Activated CD8-positive, alpha-beta T cell treated with anti-CD3 and anti-CD28 coated beads for 36 hours (primary cell): ENCODE measurements at regions of chr2 and their contacts with region 1.

Region 1: GRCh38 chr2:71068218-71069035 is at the start of gene NAGK:
- DNase-seq: peak; percentile 96
- ATAC-seq: peak; percentile 84
- H3K4me3 Mint-ChIP-seq: peak within 1 kb of the TSS; percentile 87
- H3K27ac Mint-ChIP-seq: peak within 1 kb of the TSS; percentile 98
- H3K4me1 Mint-ChIP-seq: peaks cover 48% of the 10 kb centered on the region
- H3K27me3 Mint-ChIP-seq: no peaks in the 10 kb centered on the region
- CTCF ChIP-seq: no peak
- total RNA-seq, gene NAGK: 33.6 to 38.7 TPM

Region 2: GRCh38 chr2:71045865-71046548 is 22.4 kb before region 1 on chr2:
- CTCF ChIA-PET with region 1: interaction called, 11 read pairs
- POLR2A ChIA-PET with region 1: interaction called, 5 read pairs
- intact Hi-C with region 1: no loop called
- DNase-seq: peak; percentile 19
- ATAC-seq: no peak
- H3K4me3 Mint-ChIP-seq: no peak overlapping the region
- H3K27ac Mint-ChIP-seq: no peak overlapping the region
- H3K4me1 Mint-ChIP-seq: peaks cover 10% of the 10 kb centered on the region
- H3K27me3 Mint-ChIP-seq: peaks cover 6% of the 10 kb centered on the region
- CTCF ChIP-seq: no peak

Region 3: GRCh38 chr2:71082402-71083252 is 14.2 kb after region 1 on chr2:
- CTCF ChIA-PET with region 1: interaction called, 11 read pairs
- POLR2A ChIA-PET with region 1: interaction called, 17 read pairs
- intact Hi-C with region 1: no loop called
- DNase-seq: peak; percentile 89
- ATAC-seq: peak; percentile 87
- H3K4me3 Mint-ChIP-seq: peak overlapping the region; percentile 17
- H3K27ac Mint-ChIP-seq: peak overlapping the region; percentile 3
- H3K4me1 Mint-ChIP-seq: peaks cover 15% of the 10 kb centered on the region
- H3K27me3 Mint-ChIP-seq: peaks cover 8% of the 10 kb centered on the region
- CTCF ChIP-seq: no peak

Region 4: DNA sequence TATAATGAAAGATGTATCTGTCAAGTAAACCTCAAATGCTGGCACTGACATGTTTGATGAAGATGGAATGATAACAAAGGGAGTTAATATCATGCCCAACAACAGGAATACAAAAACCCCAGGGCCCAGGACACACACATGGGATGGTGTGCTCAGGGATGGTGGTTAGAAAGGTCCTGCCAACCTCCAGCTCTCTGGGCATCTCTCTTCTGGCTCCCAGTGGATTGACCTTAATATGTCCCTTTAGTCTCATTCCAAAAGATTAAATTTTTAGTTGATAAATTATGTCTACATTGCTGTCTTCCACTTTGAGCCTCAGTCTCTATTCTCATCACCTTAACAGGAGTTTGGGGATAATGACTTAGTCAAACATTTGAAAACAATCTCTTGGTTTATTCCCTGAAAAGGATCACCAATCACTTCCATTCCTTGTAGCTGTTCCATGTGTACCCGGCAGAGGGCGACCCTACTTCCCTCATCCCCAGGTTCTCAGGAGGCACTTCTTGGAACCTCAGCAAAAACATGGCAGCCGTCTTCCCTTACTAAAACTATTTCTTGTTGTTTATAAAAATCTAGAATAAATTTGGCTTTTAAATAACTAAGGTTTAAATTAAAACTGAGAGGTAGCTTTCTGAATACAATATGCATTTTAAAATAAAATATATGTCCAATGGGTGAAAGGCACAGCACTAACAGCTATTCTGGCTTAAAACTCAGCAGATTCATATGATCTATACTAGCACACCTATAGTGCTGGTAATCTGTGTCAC is 32.0 kb after region 1 on chr2:
- CTCF ChIA-PET with region 1: interaction called, 71 read pairs
- POLR2A ChIA-PET with region 1: no interaction called
- intact Hi-C with region 1: no loop called
- DNase-seq: peak; percentile 64
- ATAC-seq: peak; percentile 74
- H3K4me3 Mint-ChIP-seq: no peak overlapping the region
- H3K27ac Mint-ChIP-seq: no peak overlapping the region
- H3K4me1 Mint-ChIP-seq: no peaks in the 10 kb centered on the region
- H3K27me3 Mint-ChIP-seq: peaks cover 5% of the 10 kb centered on the region
- CTCF ChIP-seq: peak; percentile 69

Region 5: DNA sequence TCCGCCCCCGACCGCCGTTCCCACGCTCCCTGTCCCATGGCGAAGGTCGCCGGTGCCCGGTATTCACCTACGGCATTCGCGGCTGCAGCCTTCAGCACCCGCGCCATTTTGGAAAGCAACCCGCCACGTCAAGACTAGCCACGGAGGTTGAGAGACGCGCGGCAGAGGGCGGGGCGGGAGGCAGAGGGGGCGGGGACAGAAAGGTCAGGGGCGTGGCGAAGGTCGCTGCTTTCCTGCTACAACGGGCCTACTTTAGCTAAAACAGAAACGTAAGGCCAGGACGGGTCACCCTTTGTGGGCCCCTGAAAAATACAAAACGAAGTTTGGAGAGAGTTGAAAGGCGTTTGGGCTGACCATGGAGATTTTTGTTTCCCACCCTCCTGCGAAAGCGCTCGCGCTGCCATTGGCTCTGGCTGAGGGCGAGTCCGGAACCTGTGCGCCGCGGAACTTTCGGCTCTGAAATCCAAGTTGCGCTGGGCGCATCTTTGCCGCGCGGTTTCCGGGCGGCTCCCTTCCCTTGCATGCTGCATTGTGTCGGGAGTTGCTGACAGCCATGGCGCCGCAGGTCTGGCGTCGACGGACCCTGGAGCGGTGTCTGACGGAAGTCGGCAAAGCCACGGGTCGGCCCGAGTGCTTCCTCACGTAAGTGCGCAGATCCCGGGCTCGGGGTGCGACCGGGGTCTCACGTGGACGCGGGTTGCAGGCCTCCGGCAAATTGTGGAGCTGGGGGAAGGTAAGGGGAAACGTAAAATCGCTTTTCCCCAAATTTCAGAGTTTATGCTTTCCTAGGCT is 61.9 kb after region 1 on chr2 and contains the starts of genes MCEE and MPHOSPH10:
- CTCF ChIA-PET with region 1: interaction called, 15 read pairs
- POLR2A ChIA-PET with region 1: interaction called, 21 read pairs
- intact Hi-C with region 1: loop called (anchors 1 kb)
- DNase-seq: peak; percentile 93
- ATAC-seq: peak; percentile 94
- H3K4me3 Mint-ChIP-seq: no peak within 1 kb of the TSS
- H3K27ac Mint-ChIP-seq: no peak within 1 kb of the TSS
- H3K4me1 Mint-ChIP-seq: peaks cover 14% of the 10 kb centered on the region
- H3K27me3 Mint-ChIP-seq: no peaks in the 10 kb centered on the region
- CTCF ChIP-seq: no peak
- total RNA-seq, gene MCEE: 13.8 to 14.0 TPM
- total RNA-seq, gene MPHOSPH10: 41.7 to 47.0 TPM

Region 6: DNA sequence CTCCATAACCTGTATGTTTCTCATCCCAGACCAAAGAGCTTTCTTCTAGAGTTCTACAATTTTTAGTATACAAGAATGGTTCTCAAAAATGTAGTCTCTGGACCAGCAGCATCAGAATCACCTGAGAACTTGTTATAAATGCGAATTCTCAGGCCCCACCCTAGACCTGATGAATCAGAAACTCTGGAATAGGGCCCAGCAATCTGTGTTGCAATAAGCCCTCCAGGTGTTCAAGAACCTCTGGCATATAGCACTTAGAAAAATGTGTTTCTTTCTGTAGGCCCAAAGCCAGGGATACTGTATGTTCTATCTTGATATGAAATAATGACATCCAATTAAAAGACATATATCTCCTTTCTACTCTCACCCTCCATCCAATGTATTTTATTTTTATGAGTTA is 148.1 kb after region 1 on chr2:
- CTCF ChIA-PET with region 1: no interaction called
- POLR2A ChIA-PET with region 1: no interaction called
- intact Hi-C with region 1: no loop called
- DNase-seq: no peak
- ATAC-seq: no peak
- H3K4me3 Mint-ChIP-seq: no peak overlapping the region
- H3K27ac Mint-ChIP-seq: no peak overlapping the region
- H3K4me1 Mint-ChIP-seq: no peaks in the 10 kb centered on the region
- H3K27me3 Mint-ChIP-seq: no peaks in the 10 kb centered on the region
- CTCF ChIP-seq: no peak

Region 7: GRCh38 chr2:71256421-71256820 is 188.0 kb after region 1 on chr2:
- CTCF ChIA-PET with region 1: no interaction called
- POLR2A ChIA-PET with region 1: no interaction called
- intact Hi-C with region 1: no loop called
- DNase-seq: no peak
- ATAC-seq: no peak
- H3K4me3 Mint-ChIP-seq: no peak overlapping the region
- H3K27ac Mint-ChIP-seq: no peak overlapping the region
- H3K4me1 Mint-ChIP-seq: no peaks in the 10 kb centered on the region
- H3K27me3 Mint-ChIP-seq: peaks cover 19% of the 10 kb centered on the region
- CTCF ChIP-seq: no peak